Left lung (tissue), 14 donors: ENCODE measurements at regions of chr4 and their contacts with region 1.

Region 1: DNA sequence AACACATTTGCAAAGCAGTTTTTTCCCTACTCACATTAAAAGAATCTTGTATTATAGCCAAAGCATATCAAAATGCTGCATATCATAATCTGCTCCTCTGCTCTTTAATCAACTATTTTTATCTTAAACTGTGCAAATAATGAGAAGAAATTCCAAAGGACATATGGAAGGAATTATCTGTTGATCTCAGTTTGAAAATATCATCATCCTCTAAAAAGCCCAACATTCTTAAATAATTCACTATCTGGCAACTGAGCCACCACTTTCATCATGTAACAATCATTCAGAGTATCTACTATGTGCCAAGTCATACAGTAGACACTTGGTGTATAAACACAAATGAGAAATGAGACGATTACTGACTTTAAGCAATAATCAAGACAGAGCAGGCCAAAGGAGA is 63.0 kb downstream of the PRSS12 start:
- DNase-seq: peak in 2 of 4 donors; percentile 79 to 82
- ATAC-seq: no peak
- H3K4me3 ChIP-seq: no peak overlapping the region
- H3K27ac ChIP-seq: no peak overlapping the region
- H3K4me1 ChIP-seq: no peaks in the 10 kb centered on the region
- H3K27me3 ChIP-seq: no peaks in the 10 kb centered on the region
- CTCF ChIP-seq: no peak

Region 2: DNA sequence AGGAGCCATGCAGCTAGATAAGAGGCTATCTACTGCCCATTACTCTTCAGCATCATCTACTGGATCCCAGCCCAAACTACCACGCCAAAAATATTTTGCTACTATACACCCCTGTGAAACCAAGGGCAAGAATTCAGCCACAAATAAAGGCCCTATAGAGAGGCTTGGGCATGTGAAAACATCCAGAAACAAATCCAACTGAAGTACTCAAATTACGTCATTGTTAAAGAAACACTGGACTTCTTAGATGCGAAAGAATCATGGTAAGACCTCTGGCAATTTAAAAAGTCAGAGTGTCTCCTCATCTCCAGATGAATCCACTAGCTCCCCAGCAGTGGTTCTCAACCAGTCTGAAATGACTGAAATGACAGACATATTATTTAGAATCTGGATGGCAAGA is 242.7 kb before region 1 on chr4:
- intact Hi-C with region 1: no loop called
- DNase-seq: no peak
- ATAC-seq: no peak
- H3K4me3 ChIP-seq: no peak overlapping the region
- H3K27ac ChIP-seq: no peak overlapping the region
- H3K4me1 ChIP-seq: no peaks in the 10 kb centered on the region
- H3K27me3 ChIP-seq: no peaks in the 10 kb centered on the region
- CTCF ChIP-seq: no peak

Region 3: GRCh38 chr4:118586357-118586790 is 296.6 kb after region 1 on chr4:
- intact Hi-C with region 1: loop called in 1 of 2 experiments (anchors 10 kb)
- DNase-seq: peak in 3 of 4 donors; percentile 18 to 49 (median 19)
- ATAC-seq: peak; percentile 39
- H3K4me3 ChIP-seq: no peak overlapping the region
- H3K27ac ChIP-seq: no peak overlapping the region
- H3K4me1 ChIP-seq: no peaks in the 10 kb centered on the region
- H3K27me3 ChIP-seq: peaks cover 3 to 29% of the 10 kb centered on the region in 2 donors
- CTCF ChIP-seq: no peak